Activated naive CD4-positive, alpha-beta T cell treated with anti-CD3 and anti-CD28 coated beads for 36 hours (primary cell): ENCODE measurements at regions of chr17 and their contacts with region 1.

Region 1: DNA sequence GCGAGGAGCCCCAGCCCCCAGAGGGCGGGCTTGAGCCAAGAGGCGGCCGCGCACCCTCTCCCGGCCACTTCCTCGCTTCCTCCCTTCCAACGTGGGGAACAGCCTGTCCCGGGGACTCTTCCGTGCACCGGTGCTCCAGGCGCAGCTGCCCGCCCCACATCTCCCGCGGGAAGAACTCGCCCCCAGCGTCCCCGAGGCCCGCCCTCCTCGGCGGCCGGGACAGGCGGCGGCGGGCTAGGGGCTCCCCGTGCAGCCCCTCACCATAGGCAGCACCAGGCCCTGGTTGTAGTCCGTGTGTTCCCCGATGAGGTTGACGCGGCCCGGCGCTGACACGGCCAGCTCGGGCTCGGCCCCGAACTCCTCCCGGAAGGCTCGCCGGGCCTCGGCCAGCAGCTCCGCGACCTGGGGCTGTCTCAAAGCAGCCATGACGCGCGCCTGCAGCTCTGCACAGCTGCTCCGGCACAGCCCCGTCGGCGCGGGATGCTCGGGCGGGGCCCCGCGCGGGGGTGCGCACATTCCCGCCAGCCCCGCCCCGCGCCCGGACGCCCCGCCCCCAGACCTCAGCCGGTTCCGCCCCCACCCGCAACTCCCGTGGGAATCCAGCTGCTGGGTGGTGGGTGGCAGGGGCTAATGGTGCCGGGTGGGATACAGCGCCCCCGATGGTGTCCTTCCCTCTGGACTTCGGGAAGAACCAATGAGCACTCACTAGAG is at the start of gene GALK1:
- DNase-seq: peak; percentile 82
- H3K4me3 Mint-ChIP-seq: peak within 1 kb of the TSS; percentile 84
- H3K27ac Mint-ChIP-seq: peak within 1 kb of the TSS; percentile 79
- H3K4me1 Mint-ChIP-seq: peaks cover 10% of the 10 kb centered on the region
- H3K27me3 Mint-ChIP-seq: no peaks in the 10 kb centered on the region
- total RNA-seq, gene GALK1: 48.7 to 50.2 TPM

Region 2: DNA sequence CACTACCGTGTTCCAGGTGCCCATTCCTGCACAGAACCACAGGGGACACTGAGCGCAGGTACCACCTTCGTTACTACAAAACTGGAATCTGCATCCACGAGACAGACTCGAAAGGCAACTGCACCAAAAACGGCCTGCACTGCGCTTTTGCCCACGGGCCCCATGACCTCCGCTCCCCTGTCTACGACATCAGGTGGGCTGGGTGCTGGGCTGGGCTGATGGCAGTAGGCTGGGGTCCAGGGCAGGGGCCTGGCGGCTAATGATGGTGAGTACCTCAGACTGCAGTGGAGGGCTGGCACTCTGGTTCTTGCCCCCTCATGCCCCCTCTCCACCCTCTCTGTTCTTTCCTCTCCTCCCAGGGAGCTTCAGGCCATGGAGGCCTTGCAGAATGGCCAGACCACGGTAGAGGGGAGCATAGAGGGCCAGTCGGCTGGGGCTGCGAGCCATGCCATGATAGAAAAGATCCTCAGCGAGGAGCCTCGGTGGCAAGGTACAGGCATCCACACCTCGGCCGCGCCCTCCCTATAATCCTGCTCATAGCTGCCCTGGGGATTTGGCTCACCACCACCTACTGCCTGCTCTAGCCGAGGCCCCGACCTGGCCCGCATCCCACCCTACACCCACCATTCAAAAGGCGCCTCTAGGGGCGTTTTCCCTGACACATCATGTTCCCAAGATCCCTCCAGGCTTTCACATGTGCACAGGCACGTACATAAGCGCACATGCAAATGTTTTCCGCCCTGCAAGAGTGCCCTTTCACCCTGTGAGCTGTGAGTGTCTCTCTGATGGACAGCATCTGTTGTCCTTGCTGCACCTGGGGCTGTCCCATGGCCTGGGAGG is 47.5 kb after region 1 on chr17:
- CTCF ChIA-PET with region 1: no interaction called
- intact Hi-C with region 1: no loop called
- DNase-seq: no peak
- H3K4me3 Mint-ChIP-seq: no peak overlapping the region
- H3K27ac Mint-ChIP-seq: no peak overlapping the region
- H3K4me1 Mint-ChIP-seq: peaks cover 5% of the 10 kb centered on the region
- H3K27me3 Mint-ChIP-seq: no peaks in the 10 kb centered on the region

Region 3: GRCh38 chr17:75827252-75828115 is 62.6 kb after region 1 on chr17:
- CTCF ChIA-PET with region 1: interaction called, 13 read pairs
- intact Hi-C with region 1: loop called (anchors 2 kb)
- DNase-seq: peak; percentile 75
- H3K4me3 Mint-ChIP-seq: peak overlapping the region; percentile 29
- H3K27ac Mint-ChIP-seq: peak overlapping the region; percentile 80
- H3K4me1 Mint-ChIP-seq: peaks cover 18% of the 10 kb centered on the region
- H3K27me3 Mint-ChIP-seq: no peaks in the 10 kb centered on the region

Region 4: GRCh38 chr17:75896415-75897159 is 131.7 kb after region 1 on chr17 and contains the start of gene TRIM65:
- CTCF ChIA-PET with region 1: no interaction called
- intact Hi-C with region 1: loop called (anchors 1 kb)
- DNase-seq: peak; percentile 83
- H3K4me3 Mint-ChIP-seq: peak within 1 kb of the TSS; percentile 79
- H3K27ac Mint-ChIP-seq: peak within 1 kb of the TSS; percentile 59
- H3K4me1 Mint-ChIP-seq: peaks cover 28% of the 10 kb centered on the region
- H3K27me3 Mint-ChIP-seq: no peaks in the 10 kb centered on the region
- total RNA-seq, gene TRIM65: 24.5 to 25.5 TPM